ENCODE measurements at regions of chr12 and their contacts with region 1.

Region 1: DNA sequence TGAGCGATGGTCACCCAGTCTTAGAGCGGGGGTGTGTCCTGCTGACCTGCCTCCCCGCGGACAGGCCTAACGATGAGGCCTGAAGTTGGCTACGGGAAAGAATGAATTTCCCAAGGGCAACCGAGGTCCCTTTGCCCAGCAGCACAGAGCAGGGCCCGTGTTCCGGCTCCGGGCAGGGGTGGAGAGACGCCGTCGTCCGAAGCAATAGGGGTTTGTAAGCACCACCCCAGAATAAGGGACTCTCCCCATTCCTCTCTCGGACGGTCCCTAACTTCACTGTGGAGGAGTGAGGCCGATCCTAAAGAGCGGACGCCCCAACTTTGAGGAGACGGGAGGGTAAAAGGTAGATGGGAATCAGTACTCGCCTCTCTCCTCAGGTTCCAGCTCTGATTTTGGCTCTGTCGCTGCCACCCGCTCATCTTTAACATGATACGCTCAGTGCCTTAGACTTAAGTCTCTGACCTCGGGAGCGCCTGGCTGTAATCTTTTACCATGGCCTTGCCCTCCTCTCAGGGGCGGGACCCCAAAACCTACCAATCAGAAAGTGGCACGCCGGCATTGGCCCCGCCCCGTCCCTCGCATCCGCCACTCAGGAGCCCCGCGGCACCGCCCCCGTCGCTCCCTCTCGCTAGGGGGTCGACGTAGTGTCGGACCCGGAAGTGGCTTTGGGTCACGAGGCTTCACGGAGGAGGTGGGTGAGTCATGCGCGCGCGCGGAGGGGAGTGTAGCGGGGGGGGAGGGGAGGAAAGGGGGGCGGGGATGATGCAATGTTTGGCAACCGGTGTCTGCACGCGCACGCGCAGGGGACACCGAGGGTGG is at the start of gene DDIT3:
- DNase-seq: peak; percentile 100
- H3K4me3 ChIP-seq: peak within 1 kb of the TSS; percentile 65 to 91
- H3K27ac ChIP-seq: peak within 1 kb of the TSS; percentile 95 to 100
- H3K4me1 ChIP-seq: peaks cover 4 to 64% (median 59%) of the 10 kb centered on the region in 4 donors
- H3K27me3 ChIP-seq: no peaks in the 10 kb centered on the region
- CTCF ChIP-seq: no peak

Region 2: GRCh38 chr12:57431721-57432188 is 88.5 kb before region 1 on chr12:
- intact Hi-C with region 1: no loop called
- DNase-seq: no peak
- H3K4me3 ChIP-seq: peak overlapping the region in 1 of 2 donors; percentile 76
- H3K27ac ChIP-seq: peak overlapping the region; percentile 97 to 99
- H3K4me1 ChIP-seq: peaks cover 0 to 15% (median 11%) of the 10 kb centered on the region in 4 donors
- H3K27me3 ChIP-seq: no peaks in the 10 kb centered on the region
- CTCF ChIP-seq: no peak

Region 3: DNA sequence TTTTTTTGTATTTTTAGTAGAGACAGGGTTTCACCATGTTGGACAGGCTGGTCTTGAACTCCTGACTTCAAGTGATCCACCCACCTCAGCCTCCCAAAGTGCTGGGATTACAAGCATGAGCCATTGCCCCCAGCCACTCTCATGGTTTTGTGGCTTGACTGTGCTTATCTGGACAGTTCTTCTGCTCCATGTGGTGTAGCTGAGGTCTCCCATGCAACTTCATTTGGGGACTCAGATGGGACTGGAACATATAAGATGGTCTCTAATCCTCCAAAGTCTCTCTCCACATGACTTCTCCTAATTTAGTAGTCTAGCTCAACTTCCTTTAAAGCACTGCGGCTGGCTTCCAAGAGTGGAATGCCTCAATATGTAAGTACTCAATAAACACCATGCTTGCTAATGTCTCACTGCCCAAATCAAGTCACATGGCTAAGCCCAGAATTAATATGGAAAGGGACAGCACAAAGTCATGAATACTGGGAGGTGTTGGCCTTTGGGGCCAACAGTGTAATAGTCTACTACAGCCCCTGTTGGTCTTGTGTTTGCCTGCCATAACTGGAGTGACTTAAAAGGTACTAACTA is 78.3 kb before region 1 on chr12:
- intact Hi-C with region 1: no loop called
- DNase-seq: no peak
- H3K4me3 ChIP-seq: no peak overlapping the region
- H3K27ac ChIP-seq: no peak overlapping the region
- H3K4me1 ChIP-seq: no peaks in the 10 kb centered on the region
- H3K27me3 ChIP-seq: no peaks in the 10 kb centered on the region
- CTCF ChIP-seq: no peak

Region 4: DNA sequence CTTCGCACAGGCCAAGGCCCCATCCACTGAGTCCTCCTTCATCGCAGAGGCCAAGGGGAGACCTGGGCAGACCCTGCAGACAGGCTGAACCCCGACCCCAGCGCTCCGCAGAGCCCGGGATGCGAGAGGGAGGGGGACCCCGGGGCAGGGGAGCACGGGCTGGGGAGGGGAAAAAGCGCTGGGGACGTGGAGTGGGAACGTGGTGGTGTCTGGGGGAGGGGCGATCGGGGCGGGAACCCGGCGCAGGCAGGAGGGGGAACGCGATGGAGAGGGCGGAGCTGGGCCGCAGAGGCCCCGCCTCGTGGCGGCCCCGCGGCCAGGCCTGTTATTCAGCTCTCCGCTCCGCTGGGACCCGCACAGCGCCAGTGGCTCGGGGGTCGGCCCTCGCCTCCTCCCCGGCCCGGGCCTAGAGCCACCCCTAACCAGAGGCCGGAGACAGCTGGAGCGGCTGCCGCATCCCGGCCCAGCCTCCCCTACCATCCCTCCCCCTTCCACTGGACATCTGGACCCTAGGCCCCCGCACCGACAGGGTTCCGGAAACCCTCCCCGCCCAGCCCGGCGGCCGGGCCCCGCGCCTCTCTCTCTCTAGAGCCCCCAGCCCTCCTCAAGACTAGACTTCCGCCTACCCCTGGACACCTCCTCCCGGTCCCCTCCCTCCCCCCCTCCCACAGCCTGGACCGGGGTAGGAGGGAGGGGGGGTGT is 91.0 kb after region 1 on chr12 and contains the start of gene ARHGEF25:
- intact Hi-C with region 1: loop called (anchors 10 kb)
- DNase-seq: peak; percentile 64 to 92
- H3K4me3 ChIP-seq: peak within 1 kb of the TSS; percentile 82 to 85
- H3K27ac ChIP-seq: peak within 1 kb of the TSS; percentile 97 to 99
- H3K4me1 ChIP-seq: peaks cover 0 to 63% (median 51%) of the 10 kb centered on the region in 4 donors
- H3K27me3 ChIP-seq: no peaks in the 10 kb centered on the region
- CTCF ChIP-seq: no peak

Region 5: GRCh38 chr12:58932806-58933681 is 1412.8 kb after region 1 on chr12:
- intact Hi-C with region 1: no loop called
- DNase-seq: no peak
- H3K4me3 ChIP-seq: no peak overlapping the region
- H3K27ac ChIP-seq: no peak overlapping the region
- H3K4me1 ChIP-seq: no peaks in the 10 kb centered on the region
- H3K27me3 ChIP-seq: no peaks in the 10 kb centered on the region
- CTCF ChIP-seq: no peak